MCF 10A (cell line): ENCODE measurements at regions of chrX and their contacts with region 1.

Region 1: DNA sequence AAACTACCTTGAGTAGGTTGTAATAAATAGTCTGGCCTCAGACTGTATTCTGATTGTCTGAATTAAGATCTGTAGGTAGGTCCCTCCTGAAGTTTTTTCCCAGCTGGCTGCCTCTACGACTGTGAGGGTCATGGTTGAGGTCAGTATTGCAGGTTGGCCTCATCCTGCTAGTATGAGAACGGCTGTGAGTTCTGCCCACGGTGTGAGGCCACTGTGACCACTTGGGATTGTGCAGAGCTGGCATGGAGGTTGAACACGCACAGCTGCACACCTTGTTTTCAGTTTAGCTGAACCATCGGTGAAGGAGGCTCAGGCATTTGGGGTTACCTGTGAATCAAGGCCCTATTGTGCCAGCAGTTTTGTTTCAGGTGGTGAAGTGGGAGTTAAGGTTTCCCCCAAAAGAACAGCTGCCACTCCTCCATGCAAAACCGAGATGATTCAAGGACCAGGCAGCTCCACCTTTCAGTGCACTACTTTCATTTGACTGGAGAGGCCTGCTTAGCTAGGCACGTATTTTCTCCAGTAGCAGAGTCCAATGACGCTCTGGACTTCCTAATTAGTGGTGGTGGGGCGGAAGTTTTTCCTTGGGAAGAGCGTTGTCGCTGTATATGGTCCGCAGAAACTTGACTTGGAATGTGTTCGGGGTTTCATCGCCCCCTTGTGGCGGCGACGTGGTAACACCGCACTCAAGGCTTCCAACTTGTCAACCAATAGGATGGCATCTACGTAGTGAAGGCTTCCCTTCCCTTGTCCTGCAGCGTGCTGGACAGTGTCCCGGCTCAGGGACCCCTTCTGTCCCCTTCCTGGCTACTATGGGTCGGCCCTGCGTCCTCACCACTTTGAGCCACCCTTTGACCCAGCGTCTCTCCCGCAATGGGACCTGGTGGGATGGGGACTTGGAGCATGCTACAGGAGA is 13.8 kb downstream of the CMC4 start:
- DNase-seq: peak; percentile 70
- H3K4me3 Mint-ChIP-seq: no peak overlapping the region
- H3K27ac Mint-ChIP-seq: no peak overlapping the region
- H3K4me1 Mint-ChIP-seq: no peaks in the 10 kb centered on the region
- H3K27me3 Mint-ChIP-seq: peaks cover 29% of the 10 kb centered on the region
- CTCF ChIP-seq: peak; percentile 68

Region 2: GRCh38 chrX:154986826-154987576 is 70.1 kb before region 1 on chrX:
- CTCF ChIA-PET with region 1: interaction called, 37 read pairs
- POLR2A ChIA-PET with region 1: interaction called, 3 read pairs
- intact Hi-C with region 1: loop called (anchors 1 kb)
- DNase-seq: no peak
- H3K4me3 Mint-ChIP-seq: no peak overlapping the region
- H3K27ac Mint-ChIP-seq: no peak overlapping the region
- H3K4me1 Mint-ChIP-seq: no peaks in the 10 kb centered on the region
- H3K27me3 Mint-ChIP-seq: peaks cover 18% of the 10 kb centered on the region
- CTCF ChIP-seq: peak; percentile 20

Region 3: DNA sequence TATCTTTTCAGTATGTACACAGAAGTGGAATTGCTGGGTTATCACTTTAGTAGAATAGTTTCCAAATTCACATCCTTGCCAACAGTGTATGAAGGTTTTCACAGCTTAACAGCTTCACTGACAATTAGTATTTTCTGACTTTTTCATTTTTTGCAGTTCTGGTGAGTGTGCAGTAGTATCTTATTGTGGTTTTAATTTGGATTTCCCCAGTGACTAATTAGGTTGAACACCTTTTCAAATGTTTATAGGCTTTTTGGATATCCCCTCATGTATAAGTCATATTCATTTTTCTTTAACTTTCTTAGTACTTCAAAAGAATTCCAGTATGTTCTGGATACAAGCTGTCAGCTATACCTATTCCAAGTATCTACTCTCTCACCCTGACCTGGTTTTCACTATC is 51.3 kb after region 1 on chrX:
- CTCF ChIA-PET with region 1: no interaction called
- POLR2A ChIA-PET with region 1: no interaction called
- intact Hi-C with region 1: no loop called
- DNase-seq: no peak
- H3K4me3 Mint-ChIP-seq: no peak overlapping the region
- H3K27ac Mint-ChIP-seq: no peak overlapping the region
- H3K4me1 Mint-ChIP-seq: peaks cover 21% of the 10 kb centered on the region
- H3K27me3 Mint-ChIP-seq: no peaks in the 10 kb centered on the region
- CTCF ChIP-seq: no peak